Esophagus muscularis mucosa (tissue), 4 donors: ENCODE measurements at regions of chr7 and their contacts with region 1.

Region 1: DNA sequence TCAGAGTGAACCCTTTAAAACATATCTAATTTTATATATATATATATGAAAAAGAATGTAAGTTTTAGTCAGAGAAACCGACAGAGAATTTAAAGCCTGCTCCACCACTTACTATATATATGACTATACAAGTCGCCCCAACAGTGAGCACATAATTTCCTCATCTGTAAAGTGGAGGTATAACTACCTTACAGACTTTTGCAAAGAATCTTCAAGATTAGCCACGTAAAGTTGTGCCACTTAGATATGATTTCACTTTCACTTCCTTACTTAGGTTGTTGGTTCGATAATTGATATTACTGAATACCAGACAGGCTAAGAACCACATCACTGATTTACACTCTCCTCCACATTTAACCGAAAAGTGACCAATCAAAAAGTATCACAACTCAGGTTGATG is 94.7 kb downstream of the PDE1C start:
- DNase-seq: no peak
- H3K4me3 ChIP-seq: no peak overlapping the region
- H3K27ac ChIP-seq: no peak overlapping the region
- H3K4me1 ChIP-seq: peaks cover 0 to 19% (median 0%) of the 10 kb centered on the region in 4 donors
- H3K27me3 ChIP-seq: no peaks in the 10 kb centered on the region
- CTCF ChIP-seq: no peak
- EP300 ChIP-seq: no peak
- POLR2A ChIP-seq: no peak

Region 2: DNA sequence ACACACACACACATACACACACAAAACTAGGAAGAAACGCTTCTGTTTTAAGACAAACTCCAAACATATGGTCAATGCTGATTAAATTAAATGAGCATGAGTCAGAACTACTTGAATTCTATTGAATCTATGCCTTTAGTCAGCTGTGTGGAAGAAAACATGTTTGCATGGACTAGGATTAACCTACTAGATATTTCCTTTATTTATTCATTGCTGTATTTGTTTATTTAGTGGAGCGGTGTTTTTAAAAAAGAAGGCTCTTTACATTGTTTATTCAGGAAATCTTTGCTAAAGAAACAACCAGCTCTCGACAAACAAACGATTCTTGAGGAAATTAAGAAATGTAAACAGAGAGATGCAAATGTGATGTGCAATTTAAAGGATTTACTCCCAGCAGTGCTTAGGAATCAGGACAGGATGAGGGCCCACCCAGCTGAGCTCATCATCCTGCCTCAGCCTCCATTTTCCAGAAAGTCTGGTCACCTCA is 11.4 kb after region 1 on chr7:
- intact Hi-C with region 1: loop called (anchors 1 kb)
- DNase-seq: no peak
- H3K4me3 ChIP-seq: no peak overlapping the region
- H3K27ac ChIP-seq: no peak overlapping the region
- H3K4me1 ChIP-seq: peaks cover 0 to 11% (median 7%) of the 10 kb centered on the region in 4 donors
- H3K27me3 ChIP-seq: no peaks in the 10 kb centered on the region
- CTCF ChIP-seq: no peak
- EP300 ChIP-seq: no peak
- POLR2A ChIP-seq: no peak

Region 3: GRCh38 chr7:32301427-32301826 is 325.9 kb after region 1 on chr7:
- intact Hi-C with region 1: no loop called
- DNase-seq: no peak
- H3K4me3 ChIP-seq: no peak overlapping the region
- H3K27ac ChIP-seq: no peak overlapping the region
- H3K4me1 ChIP-seq: peaks cover 0 to 16% (median 13%) of the 10 kb centered on the region in 4 donors
- H3K27me3 ChIP-seq: peaks cover 0 to 47% (median 11%) of the 10 kb centered on the region in 4 donors
- CTCF ChIP-seq: no peak
- EP300 ChIP-seq: no peak
- POLR2A ChIP-seq: no peak